CD4-positive, alpha-beta T cell (primary cell): ENCODE measurements at regions of chr4 and their contacts with region 1.

Region 1: DNA sequence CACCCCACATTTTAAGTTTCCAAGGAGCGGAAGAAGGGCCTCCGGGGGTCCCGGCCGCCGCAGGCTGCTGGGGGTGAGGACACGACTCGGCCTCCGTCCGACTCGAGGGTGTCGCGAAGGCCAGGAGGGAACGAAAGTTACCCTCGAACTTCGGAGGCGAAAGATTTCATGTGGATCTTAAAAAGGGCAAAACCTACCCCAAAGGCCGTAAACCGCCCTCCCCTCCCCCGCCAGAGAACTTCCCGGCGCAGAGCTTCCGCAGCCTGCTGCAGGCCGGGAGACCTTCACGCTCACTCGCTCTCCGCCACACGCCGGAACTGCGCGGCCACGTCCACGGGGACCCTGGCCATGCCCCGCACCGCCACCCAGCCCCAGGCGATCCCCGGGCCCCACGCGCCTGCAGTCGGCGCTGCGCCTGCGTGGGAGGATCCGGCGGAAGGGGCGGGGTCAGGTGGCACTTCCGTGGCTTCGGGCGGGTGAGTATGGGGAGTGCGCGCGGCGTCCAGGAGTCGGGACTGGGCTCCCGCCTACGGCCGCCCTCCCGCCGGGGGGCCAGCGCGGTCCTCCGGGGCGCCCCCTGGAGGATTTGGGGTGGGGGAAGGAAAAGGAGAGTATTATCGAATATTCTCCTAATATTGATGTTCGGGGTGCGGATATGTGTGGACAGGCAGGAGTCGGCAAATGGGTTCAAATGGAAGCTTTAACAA is at the start of gene MMAA:
- DNase-seq: peak; percentile 88 to 97 (median 92)
- ATAC-seq: peak; percentile 92
- H3K4me3 ChIP-seq: peak within 1 kb of the TSS; percentile 72
- H3K4me3 Mint-ChIP-seq: peak within 1 kb of the TSS; percentile 99
- H3K27ac ChIP-seq: peak within 1 kb of the TSS; percentile 92 to 94
- H3K27ac Mint-ChIP-seq: peak within 1 kb of the TSS; percentile 99
- H3K4me1 ChIP-seq: peaks cover 10% of the 10 kb centered on the region
- H3K4me1 Mint-ChIP-seq: peaks cover 54% of the 10 kb centered on the region
- H3K27me3 ChIP-seq: no peaks in the 10 kb centered on the region
- H3K27me3 Mint-ChIP-seq: peaks cover 6% of the 10 kb centered on the region
- CTCF ChIP-seq: peak; percentile 67
- total RNA-seq, gene MMAA: 7.0 to 7.2 TPM

Region 2: GRCh38 chr4:145180298-145181090 is 438.6 kb before region 1 on chr4 and contains the start of gene OTUD4:
- CTCF ChIA-PET with region 1: interaction called, 4 read pairs
- POLR2A ChIA-PET with region 1: interaction called, 35 read pairs
- intact Hi-C with region 1: loop called (anchors 2 kb)
- DNase-seq: peak; percentile 88 to 98 (median 94)
- ATAC-seq: peak; percentile 83
- H3K4me3 ChIP-seq: peak within 1 kb of the TSS; percentile 88
- H3K4me3 Mint-ChIP-seq: peak within 1 kb of the TSS; percentile 99
- H3K27ac ChIP-seq: peak within 1 kb of the TSS; percentile 92 to 95
- H3K27ac Mint-ChIP-seq: peak within 1 kb of the TSS; percentile 99
- H3K4me1 ChIP-seq: peaks cover 33% of the 10 kb centered on the region
- H3K4me1 Mint-ChIP-seq: peaks cover 38% of the 10 kb centered on the region
- H3K27me3 ChIP-seq: no peaks in the 10 kb centered on the region
- H3K27me3 Mint-ChIP-seq: no peaks in the 10 kb centered on the region
- CTCF ChIP-seq: no peak
- total RNA-seq, gene OTUD4: 75.1 to 81.1 TPM

Region 3: GRCh38 chr4:145218251-145218650 is 400.8 kb before region 1 on chr4:
- CTCF ChIA-PET with region 1: no interaction called
- POLR2A ChIA-PET with region 1: no interaction called
- intact Hi-C with region 1: no loop called
- DNase-seq: no peak
- ATAC-seq: no peak
- H3K4me3 ChIP-seq: no peak overlapping the region
- H3K4me3 Mint-ChIP-seq: no peak overlapping the region
- H3K27ac ChIP-seq: no peak overlapping the region
- H3K27ac Mint-ChIP-seq: no peak overlapping the region
- H3K4me1 ChIP-seq: no peaks in the 10 kb centered on the region
- H3K4me1 Mint-ChIP-seq: no peaks in the 10 kb centered on the region
- H3K27me3 ChIP-seq: no peaks in the 10 kb centered on the region
- H3K27me3 Mint-ChIP-seq: no peaks in the 10 kb centered on the region
- CTCF ChIP-seq: no peak

Region 4: DNA sequence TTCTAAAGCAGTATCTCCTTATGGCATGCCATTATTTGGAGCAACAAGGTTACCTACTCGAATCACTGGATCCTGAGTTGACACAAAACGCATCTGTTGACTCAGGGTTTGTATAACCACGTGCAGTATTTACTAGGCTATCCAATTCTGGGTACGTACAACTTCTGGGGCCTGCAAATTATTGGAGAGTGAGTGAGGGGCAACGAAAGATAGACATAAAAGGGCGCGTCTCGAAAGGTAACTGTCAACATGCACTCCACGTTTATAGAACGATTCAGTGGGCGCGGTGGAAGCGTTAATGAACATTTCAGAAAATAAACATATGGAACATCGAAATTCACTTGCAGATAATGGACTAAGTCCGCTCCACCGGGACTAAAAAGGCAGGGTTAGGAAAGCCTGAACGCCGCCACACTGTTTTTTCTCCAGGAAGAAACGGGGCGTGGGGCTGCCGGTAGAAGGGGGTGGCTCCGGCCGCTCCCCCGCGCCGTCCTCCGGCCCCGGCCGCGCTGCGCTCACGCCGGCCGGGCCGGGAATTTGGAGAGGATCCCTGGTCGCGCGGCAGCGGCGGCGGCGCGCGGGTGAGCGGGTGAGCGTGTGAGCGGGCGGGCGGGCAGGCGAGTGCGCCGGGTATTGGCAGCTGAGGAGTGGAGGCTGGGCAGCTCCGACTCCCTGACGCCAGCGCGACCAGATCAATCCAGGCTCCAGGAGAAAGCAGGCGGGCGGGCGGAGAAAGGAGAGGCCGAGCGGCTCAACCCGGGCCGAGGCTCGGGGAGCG is 137.7 kb before region 1 on chr4 and contains the start of gene SMAD1:
- CTCF ChIA-PET with region 1: no interaction called
- POLR2A ChIA-PET with region 1: interaction called, 6 read pairs
- intact Hi-C with region 1: loop called in 1 of 2 experiments (anchors 2 kb)
- DNase-seq: peak in 6 of 14 experiments; percentile 17 to 51 (median 35)
- ATAC-seq: peak; percentile 57
- H3K4me3 ChIP-seq: peak within 1 kb of the TSS; percentile 53
- H3K4me3 Mint-ChIP-seq: peak within 1 kb of the TSS; percentile 98
- H3K27ac ChIP-seq: no peak within 1 kb of the TSS
- H3K27ac Mint-ChIP-seq: peak within 1 kb of the TSS; percentile 88
- H3K4me1 ChIP-seq: peaks cover 12% of the 10 kb centered on the region
- H3K4me1 Mint-ChIP-seq: peaks cover 8% of the 10 kb centered on the region
- H3K27me3 ChIP-seq: peaks cover 10 to 16% of the 10 kb centered on the region in 2 experiments
- H3K27me3 Mint-ChIP-seq: no peaks in the 10 kb centered on the region
- CTCF ChIP-seq: no peak
- total RNA-seq, gene SMAD1: 9.7 to 11.5 TPM

Region 5: DNA sequence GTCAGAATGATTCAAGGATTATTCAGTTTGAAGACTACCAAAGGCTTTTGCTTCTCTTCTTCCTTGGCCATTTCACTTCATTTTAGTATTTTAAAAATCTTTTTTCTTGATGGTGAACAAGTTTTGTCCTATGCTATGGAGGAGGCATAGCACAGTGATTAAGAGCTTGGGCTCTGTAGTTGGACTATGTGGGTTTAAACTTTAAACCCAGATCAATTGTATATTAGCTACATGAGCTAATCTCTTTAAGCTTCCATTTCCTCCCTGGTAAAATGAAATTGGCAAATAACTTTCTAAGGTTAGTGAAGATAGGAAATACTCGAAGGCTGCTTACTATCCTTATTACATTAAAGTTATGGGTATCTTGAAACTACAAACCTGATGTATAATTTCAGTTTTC is 37.1 kb after region 1 on chr4:
- CTCF ChIA-PET with region 1: no interaction called
- POLR2A ChIA-PET with region 1: no interaction called
- intact Hi-C with region 1: no loop called
- DNase-seq: no peak
- ATAC-seq: no peak
- H3K4me3 ChIP-seq: no peak overlapping the region
- H3K4me3 Mint-ChIP-seq: no peak overlapping the region
- H3K27ac ChIP-seq: no peak overlapping the region
- H3K27ac Mint-ChIP-seq: no peak overlapping the region
- H3K4me1 ChIP-seq: no peaks in the 10 kb centered on the region
- H3K4me1 Mint-ChIP-seq: no peaks in the 10 kb centered on the region
- H3K27me3 ChIP-seq: no peaks in the 10 kb centered on the region
- H3K27me3 Mint-ChIP-seq: no peaks in the 10 kb centered on the region
- CTCF ChIP-seq: no peak

Region 6: GRCh38 chr4:145887241-145887991 is 268.3 kb after region 1 on chr4:
- CTCF ChIA-PET with region 1: no interaction called
- POLR2A ChIA-PET with region 1: no interaction called
- intact Hi-C with region 1: no loop called
- DNase-seq: no peak
- ATAC-seq: no peak
- H3K4me3 ChIP-seq: no peak overlapping the region
- H3K4me3 Mint-ChIP-seq: no peak overlapping the region
- H3K27ac ChIP-seq: no peak overlapping the region
- H3K27ac Mint-ChIP-seq: no peak overlapping the region
- H3K4me1 ChIP-seq: no peaks in the 10 kb centered on the region
- H3K4me1 Mint-ChIP-seq: peaks cover 3% of the 10 kb centered on the region
- H3K27me3 ChIP-seq: no peaks in the 10 kb centered on the region
- H3K27me3 Mint-ChIP-seq: no peaks in the 10 kb centered on the region
- CTCF ChIP-seq: no peak

Region 7: DNA sequence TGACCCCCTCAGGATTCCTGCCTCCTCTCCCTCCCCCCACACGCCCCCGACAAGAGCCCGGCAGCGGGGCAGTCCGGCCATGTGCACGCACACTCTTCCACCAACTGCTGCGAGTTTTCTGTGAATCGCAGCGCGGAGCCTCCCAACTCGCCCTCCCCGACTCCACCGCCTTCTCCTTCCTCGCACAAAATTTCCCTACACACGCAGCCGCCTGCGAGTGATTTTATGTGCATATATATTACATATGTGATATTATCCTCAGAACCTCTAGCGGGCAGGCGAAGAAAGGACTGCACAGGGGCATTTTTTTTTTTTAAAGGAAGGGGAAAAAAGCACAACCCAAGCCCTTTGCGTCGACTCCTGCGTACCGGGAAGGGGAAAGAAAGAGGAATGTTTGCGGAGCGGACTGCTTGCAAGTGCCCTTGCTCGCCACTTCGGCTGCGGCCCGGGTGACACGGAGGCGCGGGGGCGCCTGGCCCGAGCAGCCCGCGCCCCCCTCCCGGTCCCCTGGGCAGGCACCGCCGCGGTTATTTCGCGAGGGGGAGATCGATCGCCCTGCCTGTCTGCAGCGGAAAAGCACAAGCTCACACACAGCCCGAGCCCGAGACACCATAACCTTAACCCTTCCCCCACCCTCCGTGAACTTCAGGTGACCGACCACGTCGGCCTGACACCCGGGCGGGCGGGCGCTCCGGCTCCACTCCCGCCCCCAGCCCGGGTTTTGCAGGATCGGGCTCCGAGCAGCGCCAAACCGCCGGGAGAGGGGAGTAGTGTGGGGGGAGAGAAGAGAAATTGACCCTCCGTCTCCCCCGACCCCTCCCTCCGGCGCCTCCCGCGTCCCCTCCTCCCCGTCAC is 317.3 kb after region 1 on chr4:
- CTCF ChIA-PET with region 1: no interaction called
- POLR2A ChIA-PET with region 1: interaction called, 5 read pairs
- intact Hi-C with region 1: loop called (anchors 5 to 10 kb)
- DNase-seq: peak; percentile 44 to 87 (median 64)
- ATAC-seq: peak; percentile 51
- H3K4me3 ChIP-seq: peak overlapping the region; percentile 88
- H3K4me3 Mint-ChIP-seq: peak overlapping the region; percentile 98
- H3K27ac ChIP-seq: peak overlapping the region; percentile 13 to 62
- H3K27ac Mint-ChIP-seq: peak overlapping the region; percentile 90
- H3K4me1 ChIP-seq: peaks cover 16% of the 10 kb centered on the region
- H3K4me1 Mint-ChIP-seq: peaks cover 51% of the 10 kb centered on the region
- H3K27me3 ChIP-seq: no peaks in the 10 kb centered on the region
- H3K27me3 Mint-ChIP-seq: peaks cover 5% of the 10 kb centered on the region
- CTCF ChIP-seq: peak; percentile 46

Region 8: GRCh38 chr4:146311238-146311970 is 692.3 kb after region 1 on chr4:
- CTCF ChIA-PET with region 1: no interaction called
- POLR2A ChIA-PET with region 1: no interaction called
- intact Hi-C with region 1: no loop called
- DNase-seq: no peak
- ATAC-seq: no peak
- H3K4me3 ChIP-seq: no peak overlapping the region
- H3K4me3 Mint-ChIP-seq: no peak overlapping the region
- H3K27ac ChIP-seq: no peak overlapping the region
- H3K27ac Mint-ChIP-seq: no peak overlapping the region
- H3K4me1 ChIP-seq: no peaks in the 10 kb centered on the region
- H3K4me1 Mint-ChIP-seq: no peaks in the 10 kb centered on the region
- H3K27me3 ChIP-seq: no peaks in the 10 kb centered on the region
- H3K27me3 Mint-ChIP-seq: no peaks in the 10 kb centered on the region
- CTCF ChIP-seq: no peak

Region 9: DNA sequence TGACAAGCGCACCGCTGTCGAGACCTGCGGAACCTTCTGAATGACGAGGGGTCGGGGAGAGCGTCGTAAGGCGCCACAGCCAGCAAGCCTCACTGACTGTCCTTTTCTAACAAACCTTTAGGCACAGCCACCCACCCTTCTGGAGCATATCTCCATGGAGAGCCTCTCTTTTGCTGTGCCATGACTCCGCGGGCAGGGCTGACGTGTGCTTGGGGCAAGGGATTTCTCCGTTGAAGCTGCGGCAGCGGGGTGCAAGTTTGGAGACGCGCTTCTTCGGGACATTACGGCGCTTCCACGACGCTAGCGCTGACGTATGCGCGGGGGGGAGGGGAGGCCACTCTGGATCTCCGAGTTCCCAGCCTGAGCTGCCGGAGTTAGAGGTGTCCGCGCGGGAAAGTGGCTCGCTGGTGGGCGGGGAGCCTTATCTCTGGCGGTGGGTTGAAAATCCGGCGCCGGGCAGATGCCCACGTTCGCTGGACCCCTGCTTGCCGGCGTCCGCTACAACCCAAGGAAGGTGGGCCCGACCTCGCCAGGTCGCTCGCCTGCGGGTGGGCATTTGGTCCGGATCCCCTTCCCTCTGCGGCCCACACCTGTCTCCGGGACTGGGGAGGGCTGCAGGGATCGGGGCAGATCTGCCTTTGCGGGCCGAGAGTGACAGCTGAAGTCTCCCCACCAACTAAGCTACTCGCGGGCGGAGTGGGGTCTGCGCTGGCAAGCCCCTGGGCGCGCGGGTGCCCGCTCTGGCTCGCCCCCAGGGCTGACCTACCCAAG is 903.2 kb after region 1 on chr4:
- CTCF ChIA-PET with region 1: no interaction called
- POLR2A ChIA-PET with region 1: interaction called, 3 read pairs
- intact Hi-C with region 1: loop called in 1 of 2 experiments (anchors 5 kb)
- DNase-seq: peak; percentile 62 to 91 (median 79)
- ATAC-seq: peak; percentile 81
- H3K4me3 ChIP-seq: peak overlapping the region; percentile 89
- H3K4me3 Mint-ChIP-seq: no peak overlapping the region
- H3K27ac ChIP-seq: peak overlapping the region; percentile 59 to 62
- H3K27ac Mint-ChIP-seq: no peak overlapping the region
- H3K4me1 ChIP-seq: peaks cover 10% of the 10 kb centered on the region
- H3K4me1 Mint-ChIP-seq: peaks cover 30% of the 10 kb centered on the region
- H3K27me3 ChIP-seq: no peaks in the 10 kb centered on the region
- H3K27me3 Mint-ChIP-seq: no peaks in the 10 kb centered on the region
- CTCF ChIP-seq: no peak